Posterior cingulate gyrus (tissue), 11 donors: ENCODE measurements at regions of chr5 and their contacts with region 1.

Region 1: DNA sequence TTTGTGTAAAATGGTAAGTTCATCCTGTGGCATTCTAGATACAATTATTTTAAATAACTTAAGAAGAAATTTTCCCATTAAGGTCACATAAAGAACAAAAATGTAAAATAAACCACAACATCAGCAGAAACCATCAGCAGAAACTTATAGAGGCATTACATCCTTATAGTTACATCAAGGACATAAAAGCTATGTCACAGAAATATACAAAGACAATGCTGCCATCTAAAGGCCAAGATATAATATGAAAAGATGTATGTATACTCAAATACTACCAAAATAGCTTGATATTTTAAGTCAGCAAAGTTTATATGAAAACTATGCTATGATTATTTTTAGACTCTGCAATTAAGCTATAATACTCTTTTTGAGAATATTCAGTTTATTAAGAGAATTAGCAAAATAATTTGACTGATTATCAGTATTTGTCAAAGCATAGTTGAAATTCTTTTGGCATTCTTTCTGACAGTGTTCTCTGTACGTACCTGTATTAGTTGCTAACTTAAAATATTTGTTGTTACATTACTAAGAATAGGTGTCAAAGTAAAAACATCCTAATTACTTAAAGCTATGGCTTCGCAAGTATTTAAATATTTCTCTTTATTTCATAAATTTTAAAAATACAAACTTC is 36.2 kb downstream of the FBXL17 start:
- DNase-seq: no peak

Region 2: GRCh38 chr5:108216890-108217289 is 128.8 kb before region 1 on chr5:
- intact Hi-C with region 1: no loop called
- DNase-seq: no peak

Region 3: GRCh38 chr5:108249095-108249784 is 96.4 kb before region 1 on chr5:
- intact Hi-C with region 1: no loop called
- DNase-seq: no peak

Region 4: GRCh38 chr5:108260117-108260857 is 85.4 kb before region 1 on chr5:
- intact Hi-C with region 1: loop called (anchors 1 kb)
- DNase-seq: peak in 9 of 10 donors; percentile 44 to 94 (median 74)

Region 5: GRCh38 chr5:108515517-108516105 is 170.0 kb after region 1 on chr5:
- intact Hi-C with region 1: no loop called
- DNase-seq: no peak

Region 6: GRCh38 chr5:108531367-108532128 is 185.9 kb after region 1 on chr5:
- intact Hi-C with region 1: no loop called
- DNase-seq: peak in 1 of 10 donors; percentile 73